ENCODE measurements at regions of chr12 and their contacts with region 1.

Region 1: DNA sequence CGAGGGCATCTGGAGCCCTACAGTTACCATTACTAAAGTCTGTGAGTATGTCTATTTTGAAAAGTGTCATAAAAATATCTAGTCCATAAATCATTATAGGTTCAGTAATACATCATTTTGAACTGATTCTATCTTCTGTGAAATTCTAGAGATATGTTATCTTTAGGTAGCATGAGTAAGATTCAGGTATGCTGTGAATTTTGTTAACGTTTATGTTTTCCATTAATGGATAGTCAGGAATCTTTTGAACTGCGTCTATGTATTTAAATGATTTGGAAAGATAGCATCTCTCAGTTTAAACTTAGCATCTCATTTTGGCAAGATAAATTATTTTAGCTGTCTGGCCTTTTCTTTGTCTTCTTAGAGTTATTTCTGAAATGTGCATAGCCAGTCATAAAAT is 8.3 kb downstream of the ALG10B start:
- DNase-seq: no peak
- ATAC-seq: no peak

Region 2: DNA sequence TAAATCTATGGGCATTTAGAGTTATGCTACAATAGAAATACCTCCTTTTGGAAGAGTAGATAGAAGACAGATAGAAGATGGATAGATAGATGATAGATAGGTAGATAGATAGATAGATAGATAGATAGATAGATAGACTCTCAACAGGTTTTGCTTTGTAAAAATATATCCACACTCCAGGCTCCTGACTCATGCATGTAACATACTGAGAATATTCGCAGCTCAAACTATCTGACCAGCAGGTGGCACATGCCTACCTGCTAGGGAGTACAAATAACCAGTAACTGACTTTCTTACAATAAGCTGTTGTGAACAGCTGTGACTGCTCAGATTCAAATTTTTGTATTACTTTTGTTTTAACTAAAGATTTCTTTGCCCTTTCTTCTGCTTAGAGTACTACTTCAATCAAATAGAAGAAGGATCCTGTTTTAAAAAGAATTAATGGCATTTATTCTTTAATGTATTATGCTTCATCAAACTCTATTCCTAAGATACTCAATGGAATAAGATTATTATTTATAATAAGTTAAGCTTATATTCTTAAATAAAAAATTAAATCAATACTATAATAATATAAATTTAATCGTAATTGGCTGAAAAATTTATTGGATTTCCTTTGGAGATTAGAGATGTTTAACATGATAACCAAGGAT is 596.3 kb after region 1 on chr12:
- intact Hi-C with region 1: loop called in 1 of 2 experiments (anchors 10 kb)
- DNase-seq: peak; percentile 60 to 75
- ATAC-seq: peak; percentile 96

Region 3: DNA sequence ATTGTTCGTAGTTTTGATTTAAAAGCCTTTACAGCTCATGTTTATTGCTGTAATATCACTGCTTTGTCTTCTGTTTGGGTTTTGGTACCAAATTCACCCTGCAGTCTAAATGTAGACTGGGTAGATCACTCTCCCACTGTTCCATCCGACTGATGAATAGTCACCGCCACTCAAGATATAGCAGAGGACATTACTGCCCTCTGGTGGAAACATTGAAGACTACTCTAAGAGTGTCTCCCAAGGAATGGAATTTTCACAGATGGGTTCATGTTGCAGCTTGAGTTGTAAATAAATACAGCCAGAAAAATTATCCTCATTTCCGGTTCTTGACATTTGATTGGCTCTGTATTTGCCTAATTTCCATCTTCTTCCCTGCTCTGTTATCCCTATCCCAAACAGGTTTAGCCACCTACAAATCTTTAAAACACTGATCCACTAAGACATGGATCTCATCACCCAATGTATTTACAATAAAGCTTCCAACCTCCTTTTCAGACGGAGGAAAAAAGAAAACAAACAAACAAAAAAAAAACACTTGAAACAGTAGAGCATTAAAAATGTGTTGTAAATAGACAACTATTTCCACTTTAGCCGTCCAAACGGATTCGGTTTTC is 778.8 kb after region 1 on chr12:
- intact Hi-C with region 1: loop called in 1 of 2 experiments (anchors 10 kb)
- DNase-seq: no peak
- ATAC-seq: peak; percentile 96